ENCODE measurements at regions of chr1 and their contacts with region 1.

Region 1: GRCh38 chr1:98053471-98054366 is 132.9 kb upstream of the DPYD start:
- DNase-seq: peak; percentile 18 to 94 (median 57)

Region 2: DNA sequence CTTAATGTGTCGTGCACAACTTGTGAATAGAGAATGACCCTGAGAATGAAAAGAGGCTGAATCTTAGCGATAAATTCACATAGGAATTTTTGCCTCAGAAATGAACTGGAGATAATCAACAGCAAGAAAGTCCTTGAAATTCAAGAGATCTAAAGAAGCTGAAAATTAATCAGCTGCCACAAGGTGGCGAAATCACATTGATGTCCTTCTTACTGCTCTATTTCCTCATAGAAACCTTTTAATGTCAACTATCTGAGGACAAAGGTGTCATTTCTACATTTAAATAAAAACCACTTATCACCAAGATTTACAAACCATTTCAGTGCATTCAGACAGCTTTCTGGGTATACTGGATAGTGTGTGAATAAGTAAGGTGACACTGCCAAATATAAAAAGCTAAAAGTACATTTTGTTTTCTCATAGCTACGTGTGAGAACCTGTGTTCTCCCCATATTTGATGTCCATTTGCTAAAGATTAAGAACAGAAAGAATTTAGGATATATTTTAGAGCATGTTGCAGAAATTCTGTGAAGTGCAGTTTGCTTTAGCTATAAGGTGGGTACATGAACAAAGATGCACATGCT is 1817.5 kb before region 1 on chr1:
- intact Hi-C with region 1: loop called (anchors 5 kb)
- DNase-seq: peak in 3 of 10 donors; percentile 8 to 34 (median 10)

Region 3: GRCh38 chr1:96966536-96967138 is 1087.1 kb before region 1 on chr1:
- intact Hi-C with region 1: loop called (anchors 2 kb)
- DNase-seq: peak; percentile 59 to 96 (median 86)

Region 4: DNA sequence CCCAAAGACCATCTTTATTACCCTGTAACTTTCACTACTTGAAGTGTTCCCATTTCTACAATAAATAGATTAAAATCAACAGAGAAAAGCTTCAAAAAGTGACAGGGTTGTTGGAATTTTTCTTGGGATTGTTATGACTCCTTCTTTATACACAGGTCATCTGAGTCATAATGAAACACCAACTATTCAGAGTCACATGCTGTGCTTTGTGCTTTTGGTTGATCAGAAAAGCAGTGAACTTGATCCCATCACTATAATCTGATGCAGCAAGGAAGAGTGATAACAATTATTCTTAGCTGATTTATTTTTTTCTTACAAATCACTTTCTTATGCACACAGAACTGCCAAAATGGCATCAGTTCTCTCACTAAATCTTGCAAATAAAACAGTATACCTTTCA is 909.2 kb before region 1 on chr1:
- intact Hi-C with region 1: loop called (anchors 5 kb)
- DNase-seq: no peak

Region 5: GRCh38 chr1:97245682-97246081 is 808.0 kb before region 1 on chr1:
- intact Hi-C with region 1: loop called (anchors 5 kb)
- DNase-seq: peak in 1 of 10 donors; percentile 52

Region 6: GRCh38 chr1:98086796-98087441 is 33.2 kb after region 1 on chr1:
- intact Hi-C with region 1: no loop called
- DNase-seq: no peak

Region 7: GRCh38 chr1:98468111-98468717 is 414.5 kb after region 1 on chr1:
- intact Hi-C with region 1: loop called (anchors 5 kb)
- DNase-seq: no peak